Activated T-helper 1 cell treated with anti-CD3 and anti-CD28 coated beads, Interleukin-12 subunit alpha, Interleukin-12 subunit beta, Interleukin-2, Interleukin-4 antibody, amounts not matched to agents 30 ng/mL and 10 ng/mL and 1 ng/mL, durations not matched to agents 14 hours and 24 hours and 36 hours (primary cell): ENCODE measurements at regions of chr9 and their contacts with region 1.

Region 1: GRCh38 chr9:96418074-96418809 is at the start of gene ZNF367:
- DNase-seq: peak; percentile 93
- H3K4me3 Mint-ChIP-seq: peak within 1 kb of the TSS; percentile 94
- H3K27ac Mint-ChIP-seq: peak within 1 kb of the TSS; percentile 95
- H3K4me1 Mint-ChIP-seq: peaks cover 43% of the 10 kb centered on the region
- H3K27me3 Mint-ChIP-seq: no peaks in the 10 kb centered on the region
- total RNA-seq, gene ZNF367: 21.8 and 22.0 TPM in 2 replicates

Region 2: GRCh38 chr9:95510709-95511615 is 907.3 kb before region 1 on chr9:
- intact Hi-C with region 1: loop called (anchors 5 kb)
- DNase-seq: peak; percentile 82
- H3K4me3 Mint-ChIP-seq: peak overlapping the region; percentile 84
- H3K27ac Mint-ChIP-seq: peak overlapping the region; percentile 88
- H3K4me1 Mint-ChIP-seq: peaks cover 41% of the 10 kb centered on the region
- H3K27me3 Mint-ChIP-seq: peaks cover 61% of the 10 kb centered on the region

Region 3: GRCh38 chr9:96004379-96004778 is 413.9 kb before region 1 on chr9:
- intact Hi-C with region 1: no loop called
- DNase-seq: no peak
- H3K4me3 Mint-ChIP-seq: no peak overlapping the region
- H3K27ac Mint-ChIP-seq: no peak overlapping the region
- H3K4me1 Mint-ChIP-seq: peaks cover 14% of the 10 kb centered on the region
- H3K27me3 Mint-ChIP-seq: no peaks in the 10 kb centered on the region

Region 4: GRCh38 chr9:96383165-96383942 is 34.9 kb before region 1 on chr9 and contains the start of gene SLC35D2:
- intact Hi-C with region 1: loop called (anchors 2 kb)
- DNase-seq: no peak
- H3K4me3 Mint-ChIP-seq: peak within 1 kb of the TSS; percentile 80
- H3K27ac Mint-ChIP-seq: peak within 1 kb of the TSS; percentile 19
- H3K4me1 Mint-ChIP-seq: peaks cover 38% of the 10 kb centered on the region
- H3K27me3 Mint-ChIP-seq: no peaks in the 10 kb centered on the region
- total RNA-seq, gene SLC35D2: 7.9 and 8.5 TPM in 2 replicates

Region 5: GRCh38 chr9:96478829-96479371 is 60.7 kb after region 1 on chr9:
- intact Hi-C with region 1: loop called (anchors 1 kb)
- DNase-seq: no peak
- H3K4me3 Mint-ChIP-seq: no peak overlapping the region
- H3K27ac Mint-ChIP-seq: peak overlapping the region; percentile 50
- H3K4me1 Mint-ChIP-seq: peaks cover 19% of the 10 kb centered on the region
- H3K27me3 Mint-ChIP-seq: no peaks in the 10 kb centered on the region

Region 6: DNA sequence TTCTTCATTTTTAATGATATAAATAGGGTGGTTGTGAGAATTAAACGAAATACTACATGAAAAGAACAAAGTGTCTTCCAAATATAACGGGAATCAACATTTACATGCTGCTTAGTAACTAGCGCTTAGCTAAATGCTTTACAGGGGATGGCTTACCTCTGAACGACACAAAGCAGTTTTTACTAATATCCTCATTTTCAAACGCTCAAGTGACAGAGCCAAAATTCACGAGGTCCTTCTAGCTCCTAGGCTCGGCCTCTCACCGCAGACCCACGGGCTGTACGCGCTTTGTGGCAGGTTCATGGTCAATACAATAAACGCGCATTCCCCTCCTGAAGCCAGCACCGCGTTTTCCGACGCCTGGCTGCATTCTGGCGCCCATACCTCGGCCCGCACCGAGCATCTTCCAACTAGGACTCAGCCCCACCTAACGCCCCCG is 359.2 kb after region 1 on chr9:
- intact Hi-C with region 1: loop called (anchors 2 kb)
- DNase-seq: no peak
- H3K4me3 Mint-ChIP-seq: peak overlapping the region; percentile 100
- H3K27ac Mint-ChIP-seq: peak overlapping the region; percentile 93
- H3K4me1 Mint-ChIP-seq: peaks cover 19% of the 10 kb centered on the region
- H3K27me3 Mint-ChIP-seq: peaks cover 2% of the 10 kb centered on the region